PC-9 (cell line): ENCODE measurements at regions of chr1 and their contacts with region 1.

Region 1: DNA sequence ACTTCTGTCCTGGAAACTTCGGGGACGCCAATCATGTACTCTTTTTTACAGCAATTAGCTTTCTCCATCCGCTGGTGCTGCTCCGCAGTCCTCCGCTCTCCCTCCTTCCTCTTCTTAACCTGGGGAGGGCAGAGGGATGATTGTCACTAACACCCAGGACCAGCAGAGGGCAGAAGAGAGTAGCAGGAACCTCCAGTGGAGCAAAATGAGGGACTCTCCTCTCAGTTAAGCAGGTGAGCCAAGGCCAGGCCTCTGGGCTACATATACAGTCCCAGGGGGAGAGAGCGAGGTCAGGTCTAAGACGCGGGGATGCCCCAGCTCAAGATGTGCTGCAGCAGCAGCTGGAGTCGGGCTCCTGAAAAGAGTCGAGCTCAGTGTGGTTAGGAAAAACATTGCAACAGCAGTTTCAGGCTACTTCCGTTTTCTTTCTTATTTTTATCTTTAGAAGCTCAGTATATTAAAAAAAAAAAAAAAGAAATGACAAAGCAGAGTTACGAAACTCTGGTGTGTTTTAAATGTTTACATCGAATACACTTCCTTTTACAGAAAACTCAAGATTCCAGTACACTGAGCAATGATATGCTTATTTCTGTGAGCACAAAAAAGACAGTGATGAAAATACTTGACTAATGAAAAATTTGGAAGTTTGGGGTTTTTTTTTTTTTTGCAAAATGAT is 25.7 kb upstream of the NLRP3 start:
- DNase-seq: peak; percentile 44 to 75
- H3K4me3 ChIP-seq: no peak overlapping the region
- H3K27ac ChIP-seq: no peak overlapping the region
- H3K4me1 ChIP-seq: no peaks in the 10 kb centered on the region
- H3K27me3 ChIP-seq: no peaks in the 10 kb centered on the region
- CTCF ChIP-seq: peak; percentile 79

Region 2: GRCh38 chr1:247448107-247448791 is 58.0 kb after region 1 on chr1:
- CTCF ChIA-PET with region 1: no interaction called
- POLR2A ChIA-PET with region 1: interaction called, 4 read pairs
- intact Hi-C with region 1: loop called (anchors 2 kb)
- DNase-seq: peak in 1 of 2 experiments; percentile 47
- H3K4me3 ChIP-seq: peak overlapping the region; percentile 54; the same call in 1 of the 2 replicates
- H3K27ac ChIP-seq: no peak overlapping the region
- H3K4me1 ChIP-seq: no peaks in the 10 kb centered on the region
- H3K27me3 ChIP-seq: peaks cover 40% of the 10 kb centered on the region
- CTCF ChIP-seq: no peak

Region 3: DNA sequence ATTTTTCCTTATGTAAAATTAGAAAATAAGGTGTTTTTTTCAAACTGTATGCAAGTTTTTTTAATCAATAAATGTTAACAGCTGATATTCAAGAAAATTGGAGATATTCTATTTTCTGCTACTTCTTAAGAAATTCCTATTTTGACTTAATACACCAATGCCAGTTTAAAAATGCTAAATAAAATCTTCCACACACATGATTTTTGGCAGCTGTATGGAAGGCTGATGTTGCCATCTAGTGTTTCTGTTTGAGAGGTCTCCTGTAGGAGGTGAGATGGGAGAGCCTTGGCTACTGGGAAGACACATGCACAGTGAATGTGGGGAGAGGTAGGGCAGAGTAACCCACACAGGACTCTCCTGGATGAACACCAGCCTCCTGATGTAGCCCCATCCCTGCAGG is 96.8 kb after region 1 on chr1:
- CTCF ChIA-PET with region 1: interaction called, 9 read pairs
- POLR2A ChIA-PET with region 1: no interaction called
- intact Hi-C with region 1: loop called (anchors 1 kb)
- DNase-seq: peak in 1 of 2 experiments; percentile 7
- H3K4me3 ChIP-seq: no peak overlapping the region
- H3K27ac ChIP-seq: no peak overlapping the region
- H3K4me1 ChIP-seq: no peaks in the 10 kb centered on the region
- H3K27me3 ChIP-seq: peaks cover 11% of the 10 kb centered on the region; the same call in 1 of the 2 replicates
- CTCF ChIP-seq: peak; percentile 52

Region 4: DNA sequence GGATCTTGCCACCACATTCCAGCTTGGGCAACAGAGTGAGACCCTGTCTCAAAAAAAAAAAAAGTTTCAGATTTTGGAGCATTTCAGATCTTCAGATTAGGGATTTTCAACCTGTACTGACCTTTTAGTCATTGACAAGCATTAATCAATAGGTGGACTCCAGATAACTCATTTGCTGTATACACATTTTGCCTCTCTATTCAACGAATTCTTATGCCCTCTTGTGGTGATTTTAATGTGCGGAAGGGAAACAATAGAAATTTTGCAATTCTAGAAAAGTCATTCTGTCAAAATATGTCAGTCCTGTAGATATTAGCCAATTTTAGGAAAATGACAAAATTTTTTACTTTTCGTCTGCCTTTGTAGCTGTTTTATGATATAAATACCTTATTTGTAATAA is 186.2 kb after region 1 on chr1:
- CTCF ChIA-PET with region 1: no interaction called
- POLR2A ChIA-PET with region 1: no interaction called
- intact Hi-C with region 1: loop called (anchors 5 kb)
- DNase-seq: no peak
- H3K4me3 ChIP-seq: no peak overlapping the region
- H3K27ac ChIP-seq: no peak overlapping the region
- H3K4me1 ChIP-seq: no peaks in the 10 kb centered on the region
- H3K27me3 ChIP-seq: no peaks in the 10 kb centered on the region
- CTCF ChIP-seq: peak; percentile 50